Activated CD8-positive, alpha-beta T cell treated with anti-CD3 and anti-CD28 coated beads, Interleukin-2, amount 10 ng/mL, durations not matched to agents 7 days and 5 days (primary cell): ENCODE measurements at regions of chr19 and their contacts with region 1.

Region 1: DNA sequence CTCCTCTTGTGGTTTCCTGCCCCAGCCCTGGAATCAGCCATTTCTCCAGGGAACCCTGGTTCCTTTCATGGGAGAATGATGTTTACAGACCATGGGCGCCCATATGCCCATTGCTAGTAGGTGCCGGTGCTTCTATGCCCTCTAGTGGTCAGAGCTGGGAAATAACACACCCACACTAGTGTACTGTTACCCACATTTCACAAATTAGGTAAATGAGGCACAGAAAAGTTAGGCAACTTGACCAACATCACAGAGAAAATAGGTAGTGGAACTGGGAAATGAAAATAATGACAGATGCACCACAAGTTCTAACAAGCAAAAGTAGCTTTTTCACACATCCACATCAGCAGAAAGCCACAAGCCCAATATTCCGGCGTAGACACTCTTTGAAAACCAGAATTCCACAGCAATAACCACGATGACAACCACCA is 1.3 kb upstream of the CEACAM3 start:
- DNase-seq: peak; percentile 77
- ATAC-seq: peak; percentile 91
- H3K4me3 Mint-ChIP-seq: no peak overlapping the region
- H3K27ac Mint-ChIP-seq: no peak overlapping the region
- H3K4me1 Mint-ChIP-seq: no peaks in the 10 kb centered on the region
- H3K27me3 Mint-ChIP-seq: peaks cover 29% of the 10 kb centered on the region

Region 2: GRCh38 chr19:41616792-41617621 is 178.0 kb before region 1 on chr19:
- CTCF ChIA-PET with region 1: no interaction called
- POLR2A ChIA-PET with region 1: no interaction called
- DNase-seq: peak; percentile 26
- ATAC-seq: no peak
- H3K4me3 Mint-ChIP-seq: no peak overlapping the region
- H3K27ac Mint-ChIP-seq: no peak overlapping the region
- H3K4me1 Mint-ChIP-seq: no peaks in the 10 kb centered on the region
- H3K27me3 Mint-ChIP-seq: no peaks in the 10 kb centered on the region

Region 3: GRCh38 chr19:41706741-41707501 is 88.1 kb before region 1 on chr19:
- CTCF ChIA-PET with region 1: interaction called, 10 read pairs
- POLR2A ChIA-PET with region 1: no interaction called
- DNase-seq: peak; percentile 76
- ATAC-seq: peak; percentile 96
- H3K4me3 Mint-ChIP-seq: peak overlapping the region; percentile 47
- H3K27ac Mint-ChIP-seq: no peak overlapping the region
- H3K4me1 Mint-ChIP-seq: peaks cover 2% of the 10 kb centered on the region
- H3K27me3 Mint-ChIP-seq: peaks cover 9% of the 10 kb centered on the region

Region 4: DNA sequence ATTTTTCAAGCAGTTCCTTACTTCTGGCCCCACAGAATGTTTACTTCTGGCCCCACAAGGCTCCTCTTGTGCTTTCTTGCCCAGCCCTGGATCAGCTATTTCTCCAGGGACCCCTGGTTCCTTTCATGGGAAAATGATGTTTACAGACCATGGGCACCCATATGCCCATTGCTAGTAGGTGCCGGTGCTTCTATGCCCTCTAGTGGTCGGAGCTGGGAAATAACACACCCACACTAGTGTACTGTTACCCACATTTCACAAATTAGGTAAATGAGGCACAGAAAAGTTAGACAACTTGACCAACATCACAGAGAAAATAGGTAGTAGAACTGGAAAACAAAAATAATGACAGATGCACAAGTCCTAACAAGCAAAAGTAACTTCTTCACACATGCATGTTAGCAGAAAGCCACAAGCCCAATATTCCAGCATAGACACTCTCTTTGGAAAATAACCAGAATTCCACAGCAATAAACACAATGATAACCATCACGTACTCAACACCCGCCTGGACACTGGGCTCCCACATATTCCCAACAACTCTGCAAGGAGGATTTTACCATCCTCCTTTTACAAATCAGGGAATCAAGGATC is 41.0 kb before region 1 on chr19:
- CTCF ChIA-PET with region 1: interaction called, 69 read pairs
- POLR2A ChIA-PET with region 1: no interaction called
- DNase-seq: peak; percentile 78
- ATAC-seq: peak; percentile 89
- H3K4me3 Mint-ChIP-seq: no peak overlapping the region
- H3K27ac Mint-ChIP-seq: no peak overlapping the region
- H3K4me1 Mint-ChIP-seq: no peaks in the 10 kb centered on the region
- H3K27me3 Mint-ChIP-seq: peaks cover 34% of the 10 kb centered on the region

Region 5: DNA sequence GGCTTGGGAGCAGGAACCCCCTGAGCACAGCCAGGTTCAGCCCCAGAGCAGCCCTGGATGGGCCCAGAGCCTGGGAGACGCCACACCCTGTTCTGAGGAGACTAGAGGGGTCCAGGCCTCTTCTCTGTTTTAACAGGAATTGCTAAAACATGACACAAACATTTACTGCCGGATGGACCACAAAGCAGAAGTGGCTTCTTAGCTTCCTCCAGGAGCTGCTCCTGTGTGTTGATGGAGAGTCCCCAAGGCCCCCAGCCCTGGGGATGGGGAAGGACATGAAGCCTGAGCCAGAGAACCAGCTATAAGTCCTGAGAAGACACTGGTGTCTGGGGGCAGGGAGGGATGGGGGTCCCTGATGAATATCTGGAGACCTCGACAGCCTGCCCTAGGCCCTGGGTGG is 16.0 kb after region 1 on chr19:
- CTCF ChIA-PET with region 1: interaction called, 53 read pairs
- POLR2A ChIA-PET with region 1: no interaction called
- DNase-seq: no peak
- ATAC-seq: no peak
- H3K4me3 Mint-ChIP-seq: no peak overlapping the region
- H3K27ac Mint-ChIP-seq: no peak overlapping the region
- H3K4me1 Mint-ChIP-seq: peaks cover 10% of the 10 kb centered on the region
- H3K27me3 Mint-ChIP-seq: no peaks in the 10 kb centered on the region

Region 6: DNA sequence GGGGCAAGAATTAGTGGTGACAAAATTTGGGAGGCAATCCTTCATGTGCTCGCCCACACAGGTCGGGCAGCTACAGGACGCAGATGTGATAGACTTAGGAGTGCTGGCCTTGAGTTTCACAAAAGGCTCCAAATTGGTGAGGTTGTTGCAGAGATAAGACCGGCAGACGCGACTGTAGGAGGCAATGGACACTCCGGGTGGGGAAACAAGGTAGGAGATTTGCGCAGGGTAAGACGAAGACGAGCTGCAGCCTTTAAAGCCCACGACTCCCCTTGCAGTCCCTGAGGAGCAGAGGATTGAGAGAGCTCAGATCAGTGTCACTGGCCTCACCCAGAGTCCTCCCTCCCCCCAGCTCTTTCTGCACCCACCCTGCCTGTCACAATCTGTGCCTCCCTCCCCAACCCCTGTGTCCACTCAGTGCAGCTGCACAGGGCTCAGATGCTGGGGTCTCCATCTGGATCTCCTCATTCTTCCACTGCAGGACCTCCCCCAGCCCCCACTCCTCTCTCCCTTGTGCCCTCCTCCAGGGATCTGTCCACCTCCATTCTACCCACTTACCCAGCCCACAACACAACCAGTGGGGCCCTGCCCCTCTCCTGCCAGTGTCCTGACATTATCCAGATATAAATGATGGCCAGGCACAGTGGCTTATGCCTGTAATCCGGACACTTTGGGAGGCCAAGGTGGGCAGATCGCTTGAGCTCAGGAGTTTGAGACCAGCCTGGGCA is 43.1 kb after region 1 on chr19:
- CTCF ChIA-PET with region 1: interaction called, 22 read pairs
- POLR2A ChIA-PET with region 1: no interaction called
- DNase-seq: no peak
- ATAC-seq: no peak
- H3K4me3 Mint-ChIP-seq: no peak overlapping the region
- H3K27ac Mint-ChIP-seq: no peak overlapping the region
- H3K4me1 Mint-ChIP-seq: no peaks in the 10 kb centered on the region
- H3K27me3 Mint-ChIP-seq: peaks cover 29% of the 10 kb centered on the region